ENCODE measurements at regions of chr14 and their contacts with region 1.

Region 1: GRCh38 chr14:35140718-35141581 is 18.6 kb downstream of the PRORP start:
- DNase-seq: no peak
- CTCF ChIP-seq: peak; percentile 23

Region 2: GRCh38 chr14:35088514-35088913 is 52.4 kb before region 1 on chr14:
- CTCF ChIA-PET with region 1: no interaction called
- POLR2A ChIA-PET with region 1: no interaction called
- DNase-seq: no peak
- CTCF ChIP-seq: no peak

Region 3: GRCh38 chr14:35121887-35122695 is 18.9 kb before region 1 on chr14 and contains the starts of genes PPP2R3C and PRORP:
- CTCF ChIA-PET with region 1: interaction called, 12 read pairs
- POLR2A ChIA-PET with region 1: no interaction called
- DNase-seq: peak; percentile 93
- CTCF ChIP-seq: no peak

Region 4: DNA sequence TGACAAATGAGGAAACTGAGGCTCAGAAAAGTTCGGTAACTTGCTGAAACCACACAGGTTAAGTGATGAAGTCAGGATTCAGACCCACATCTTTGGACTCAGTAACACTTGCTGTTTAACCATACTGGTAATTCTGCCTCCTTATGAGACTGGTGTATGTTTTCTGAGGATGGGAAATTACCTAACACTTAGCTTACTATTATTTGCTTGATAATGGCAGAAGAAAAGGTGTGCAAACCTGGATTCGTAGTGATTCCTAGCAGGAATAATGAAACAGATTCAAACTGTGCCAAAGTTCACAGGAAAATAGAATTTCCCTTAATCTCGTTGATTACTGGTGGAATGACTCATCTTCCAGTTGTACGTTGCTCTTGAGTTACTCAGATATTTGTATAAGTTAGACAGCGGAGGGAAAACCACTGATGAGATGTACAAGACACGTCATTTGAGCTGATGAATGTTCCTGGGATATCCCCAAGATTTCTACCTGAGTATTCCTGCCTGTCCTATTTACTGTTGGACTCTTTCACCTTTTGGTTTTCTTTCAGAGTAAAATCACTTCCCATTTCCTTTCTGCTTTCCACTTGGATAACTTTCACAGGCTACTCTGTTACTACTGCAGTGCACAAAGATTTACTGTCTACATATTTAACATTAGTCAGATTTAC is 18.9 kb after region 1 on chr14:
- CTCF ChIA-PET with region 1: interaction called, 82 read pairs
- POLR2A ChIA-PET with region 1: no interaction called
- DNase-seq: no peak
- CTCF ChIP-seq: no peak

Region 5: GRCh38 chr14:35197015-35197414 is 56.1 kb after region 1 on chr14:
- CTCF ChIA-PET with region 1: no interaction called
- POLR2A ChIA-PET with region 1: no interaction called
- DNase-seq: no peak
- CTCF ChIP-seq: no peak

Region 6: GRCh38 chr14:35687335-35687939 is 546.5 kb after region 1 on chr14:
- CTCF ChIA-PET with region 1: interaction called, 14 read pairs
- POLR2A ChIA-PET with region 1: no interaction called
- DNase-seq: peak; percentile 27
- CTCF ChIP-seq: peak; percentile 85

Measured in GM10248 (cell line).